ENCODE measurements at regions of chr12 and their contacts with region 1.

Region 1: DNA sequence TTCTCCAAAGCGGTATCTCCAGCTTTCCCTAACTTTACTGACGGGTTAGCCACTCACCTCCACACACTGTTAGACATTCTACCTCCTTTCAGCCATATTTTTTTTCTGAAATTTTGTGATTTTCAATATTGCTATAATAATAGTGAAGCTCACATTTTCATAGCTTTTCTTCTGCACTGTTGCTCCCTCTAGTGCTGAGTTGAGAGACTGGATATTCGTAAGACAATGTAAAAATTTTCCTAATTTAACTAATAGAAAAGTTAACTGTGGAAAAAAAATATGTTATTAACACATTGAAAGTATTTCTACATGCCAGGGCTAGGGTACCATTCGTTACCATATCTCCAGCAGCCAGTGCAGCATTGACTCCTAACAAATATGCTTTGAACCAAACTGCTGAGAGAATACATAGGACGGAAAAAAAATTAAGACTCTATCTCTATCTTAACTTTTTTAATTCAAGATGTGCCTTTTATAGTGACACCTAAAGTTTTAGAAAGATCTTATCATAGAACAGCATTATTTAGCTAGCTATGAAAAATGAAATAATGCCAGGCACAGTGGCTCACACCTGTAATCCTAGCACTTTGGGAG is 48.7 kb upstream of the ABCC9 start:
- DNase-seq: no peak
- H3K4me3 ChIP-seq: no peak overlapping the region
- H3K27ac ChIP-seq: no peak overlapping the region
- H3K4me1 ChIP-seq: no peaks in the 10 kb centered on the region
- H3K27me3 ChIP-seq: no peaks in the 10 kb centered on the region
- CTCF ChIP-seq: peak; percentile 33 to 69 (median 54)
- POLR2A ChIP-seq: no peak

Region 2: GRCh38 chr12:21697904-21698630 is 291.8 kb before region 1 on chr12:
- intact Hi-C with region 1: loop called (anchors 5 kb)
- DNase-seq: no peak
- H3K4me3 ChIP-seq: no peak overlapping the region
- H3K27ac ChIP-seq: no peak overlapping the region
- H3K4me1 ChIP-seq: no peaks in the 10 kb centered on the region
- H3K27me3 ChIP-seq: no peaks in the 10 kb centered on the region
- CTCF ChIP-seq: peak in 5 of 6 experiments; percentile 24 to 93 (median 65)
- POLR2A ChIP-seq: no peak

Region 3: GRCh38 chr12:22360774-22361173 is 370.9 kb after region 1 on chr12:
- intact Hi-C with region 1: no loop called
- DNase-seq: no peak
- H3K4me3 ChIP-seq: no peak overlapping the region
- H3K27ac ChIP-seq: no peak overlapping the region
- H3K4me1 ChIP-seq: no peaks in the 10 kb centered on the region
- H3K27me3 ChIP-seq: no peaks in the 10 kb centered on the region
- CTCF ChIP-seq: no peak
- POLR2A ChIP-seq: no peak